ENCODE measurements at regions of chr19 and their contacts with region 1.

Region 1: GRCh38 chr19:30784850-30785457 is 412.8 kb downstream of the ZNF536 start:
- DNase-seq: peak; percentile 14 to 25
- ATAC-seq: no peak
- H3K4me3 ChIP-seq: no peak overlapping the region
- H3K27ac ChIP-seq: no peak overlapping the region
- H3K4me1 ChIP-seq: no peaks in the 10 kb centered on the region
- H3K27me3 ChIP-seq: no peaks in the 10 kb centered on the region
- CTCF ChIP-seq: peak; percentile 38 to 60 (median 39)
- POLR2A ChIP-seq: no peak

Region 2: GRCh38 chr19:30774252-30774766 is 10.6 kb before region 1 on chr19:
- in situ Hi-C with region 1: no loop called
- intact Hi-C with region 1: no loop called
- DNase-seq: no peak
- ATAC-seq: no peak
- H3K4me3 ChIP-seq: no peak overlapping the region
- H3K27ac ChIP-seq: no peak overlapping the region
- H3K4me1 ChIP-seq: no peaks in the 10 kb centered on the region
- H3K27me3 ChIP-seq: no peaks in the 10 kb centered on the region
- CTCF ChIP-seq: no peak
- POLR2A ChIP-seq: no peak

Region 3: GRCh38 chr19:32224371-32225244 is 1439.7 kb after region 1 on chr19:
- in situ Hi-C with region 1: loop called in 2 of 4 experiments (anchors 25 kb)
- intact Hi-C with region 1: no loop called
- DNase-seq: peak in 1 of 2 donors; percentile 12
- ATAC-seq: peak; percentile 73 to 80
- H3K4me3 ChIP-seq: peak overlapping the region in 2 of 4 donors; percentile 29 to 35
- H3K27ac ChIP-seq: no peak overlapping the region
- H3K4me1 ChIP-seq: no peaks in the 10 kb centered on the region
- H3K27me3 ChIP-seq: no peaks in the 10 kb centered on the region
- CTCF ChIP-seq: peak; percentile 76 to 99 (median 88)
- POLR2A ChIP-seq: no peak

Measured in gastrocnemius medialis (tissue), 4 donors.